ENCODE measurements at regions of chr17 and their contacts with region 1.

Region 1: GRCh38 chr17:82320956-82321927 is 3.8 kb upstream of the CD7 start:
- DNase-seq: no peak
- ATAC-seq: peak in 1 of 2 donors; percentile 54

Region 2: DNA sequence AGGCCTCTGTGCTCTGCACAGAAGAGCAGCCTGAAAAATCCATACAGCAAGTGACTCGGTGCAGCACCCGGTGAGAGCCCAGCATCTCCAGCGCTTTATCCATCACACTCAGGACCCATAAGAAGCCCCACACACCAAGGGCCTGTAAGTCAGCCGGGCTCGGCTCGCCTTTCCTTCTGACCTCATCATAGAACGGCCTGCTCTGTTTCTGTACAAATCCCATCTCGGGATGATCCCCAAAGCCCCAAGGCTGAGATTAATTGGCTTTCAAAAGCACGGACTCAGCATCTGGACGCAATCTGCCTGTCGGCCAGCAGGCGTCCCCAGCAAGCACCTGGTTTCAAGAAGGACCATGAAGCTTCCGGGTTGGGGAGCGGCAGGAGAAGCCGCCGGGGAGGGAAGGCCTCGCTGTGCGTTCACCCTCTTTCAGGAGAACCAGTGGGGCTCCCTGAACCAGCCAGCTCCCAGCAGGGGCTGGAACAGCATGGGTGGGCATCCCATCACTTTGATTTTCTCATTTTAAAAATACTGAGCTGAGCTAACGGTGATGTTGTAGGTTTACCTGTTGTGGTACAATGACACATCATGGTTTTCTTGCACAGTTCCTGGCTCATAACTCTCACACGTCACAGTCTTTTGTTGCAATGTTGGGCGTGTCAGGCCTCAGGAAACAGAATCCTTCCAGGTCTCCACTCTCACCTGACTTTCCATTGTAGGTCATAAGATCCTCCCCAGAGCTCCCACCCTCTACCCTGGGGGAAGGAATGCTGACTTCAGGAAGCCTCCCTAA is 115.3 kb before region 1 on chr17:
- intact Hi-C with region 1: loop called (anchors 2 to 5 kb)
- DNase-seq: peak; percentile 88
- ATAC-seq: peak; percentile 83